ENCODE measurements at regions of chrX and their contacts with region 1.

Region 1: DNA sequence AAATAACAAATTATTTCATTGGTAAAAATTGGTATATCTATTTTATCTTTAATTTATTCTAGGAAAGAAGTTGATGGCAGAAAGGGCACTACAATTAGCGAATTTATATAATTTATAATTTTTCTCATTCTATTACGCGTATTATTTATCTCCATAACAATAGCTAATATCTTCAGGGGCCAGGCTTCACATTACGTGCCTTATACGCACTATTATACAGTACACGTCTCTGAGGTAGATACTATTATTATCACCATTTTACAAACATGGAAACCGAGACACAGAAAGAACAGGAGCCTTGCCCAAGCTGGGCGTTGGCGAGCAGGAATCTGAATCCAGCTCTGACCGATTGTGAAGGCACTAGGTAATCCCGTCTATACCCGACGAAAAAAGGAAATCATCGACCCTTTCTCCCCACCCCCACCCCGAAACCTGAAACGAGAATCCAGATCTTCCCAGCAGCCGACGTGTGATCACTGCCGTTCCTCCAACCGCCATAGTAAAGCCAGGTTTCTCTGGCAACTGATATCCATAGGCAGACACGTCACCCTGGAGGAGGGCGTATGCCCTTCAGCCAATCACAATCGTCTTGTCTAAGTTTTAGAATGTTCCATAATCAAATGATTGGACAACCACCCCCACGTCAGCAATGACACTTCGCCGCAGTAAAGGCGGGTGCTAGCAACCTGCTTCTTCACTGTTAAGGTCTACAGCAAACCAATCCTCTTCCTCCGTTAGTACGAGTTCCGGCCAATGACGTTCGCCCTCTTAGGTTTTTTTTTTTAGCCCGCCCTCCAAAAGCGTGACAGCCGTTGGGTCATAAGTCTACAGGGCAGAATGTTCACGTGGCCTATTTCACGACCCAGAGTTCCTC is at the start of gene MORF4L2:
- DNase-seq: peak; percentile 93
- H3K4me3 Mint-ChIP-seq: peak within 1 kb of the TSS; percentile 83
- H3K27ac Mint-ChIP-seq: peak within 1 kb of the TSS; percentile 90
- H3K4me1 Mint-ChIP-seq: peaks cover 9% of the 10 kb centered on the region
- H3K27me3 Mint-ChIP-seq: no peaks in the 10 kb centered on the region
- total RNA-seq, gene MORF4L2: 184 to 191 TPM

Region 2: DNA sequence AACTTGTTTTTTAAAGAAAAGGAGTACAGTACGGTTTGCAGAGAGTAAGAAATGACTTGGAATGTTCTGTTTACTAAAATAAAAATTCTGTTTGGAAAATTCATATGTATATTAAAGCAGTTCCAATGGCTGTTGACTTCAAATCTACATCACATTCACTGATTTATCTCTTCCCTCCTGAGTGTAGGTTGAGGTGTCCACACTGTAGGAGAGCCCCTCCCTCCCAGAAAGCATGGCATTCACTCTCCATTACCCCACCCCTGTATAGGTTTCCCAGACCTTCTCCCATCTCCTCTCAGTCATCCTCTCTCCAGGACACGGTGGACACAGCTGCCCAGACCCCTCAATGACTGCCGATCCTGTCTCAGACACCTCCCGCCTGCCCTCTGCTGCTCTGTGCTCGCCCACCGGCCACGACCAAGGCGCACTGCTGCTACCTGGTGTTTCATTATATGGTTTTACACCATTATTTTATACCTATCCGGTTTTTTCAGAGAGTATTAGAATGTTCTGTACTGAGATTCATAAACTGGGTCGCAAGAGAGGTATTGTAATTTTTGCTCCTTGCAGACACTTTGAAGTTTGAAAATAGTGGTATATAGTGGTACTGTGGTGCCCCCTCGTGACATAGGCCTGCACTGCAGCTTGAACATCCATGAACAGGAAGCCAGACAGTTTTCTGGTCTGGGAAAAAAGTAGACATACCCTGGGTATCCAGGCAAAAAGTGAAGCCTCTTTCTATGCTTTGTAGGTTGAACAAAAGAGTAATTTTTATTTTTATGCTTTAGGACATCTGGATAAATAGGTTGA is 510.3 kb before region 1 on chrX:
- CTCF ChIA-PET with region 1: no interaction called
- POLR2A ChIA-PET with region 1: no interaction called
- intact Hi-C with region 1: no loop called
- DNase-seq: peak; percentile 69
- H3K4me3 Mint-ChIP-seq: peak overlapping the region; percentile 29
- H3K27ac Mint-ChIP-seq: no peak overlapping the region
- H3K4me1 Mint-ChIP-seq: no peaks in the 10 kb centered on the region
- H3K27me3 Mint-ChIP-seq: peaks cover 4% of the 10 kb centered on the region

Region 3: GRCh38 chrX:103310542-103311398 is 375.7 kb before region 1 on chrX and contains the start of gene BEX2:
- CTCF ChIA-PET with region 1: no interaction called
- POLR2A ChIA-PET with region 1: no interaction called
- intact Hi-C with region 1: loop called (anchors 2 kb)
- DNase-seq: peak; percentile 90
- H3K4me3 Mint-ChIP-seq: peak within 1 kb of the TSS; percentile 69
- H3K27ac Mint-ChIP-seq: no peak within 1 kb of the TSS
- H3K4me1 Mint-ChIP-seq: peaks cover 4% of the 10 kb centered on the region
- H3K27me3 Mint-ChIP-seq: no peaks in the 10 kb centered on the region
- total RNA-seq, gene BEX2: 11.3 to 12.1 TPM

Region 4: DNA sequence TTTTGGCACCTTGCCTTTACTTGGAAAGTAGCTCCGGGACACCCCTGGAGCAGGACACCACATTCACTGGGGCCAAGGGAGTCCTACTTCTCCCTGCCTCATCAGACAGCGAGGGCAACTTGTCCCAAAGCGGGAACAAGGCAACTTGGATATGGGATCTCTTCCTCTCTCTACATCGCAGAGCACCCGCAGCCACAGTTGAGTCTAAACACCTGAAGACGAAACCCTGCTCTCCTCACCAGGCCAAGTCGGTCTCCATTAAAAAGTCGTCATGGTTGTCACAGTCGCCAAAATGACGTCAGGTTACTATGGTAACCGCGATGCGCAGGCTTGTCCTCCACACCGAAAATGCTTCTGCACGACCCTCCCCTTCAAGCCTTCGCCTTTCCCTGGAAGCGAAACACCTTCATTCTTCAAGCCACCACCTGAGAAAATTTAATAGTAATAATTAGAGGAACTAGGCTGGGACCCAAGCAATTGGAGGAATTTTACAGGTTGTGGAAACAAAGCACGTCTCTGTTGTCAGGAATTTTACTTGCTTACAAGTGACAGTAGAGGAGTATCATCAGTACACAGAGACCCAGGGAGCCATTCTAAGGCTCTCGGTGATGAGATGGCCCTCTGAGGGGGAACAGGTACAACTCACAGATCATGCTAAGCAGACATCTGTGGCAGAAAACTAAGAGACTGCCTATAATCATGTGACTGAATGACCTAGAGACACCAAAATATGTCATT is 131.6 kb before region 1 on chrX:
- CTCF ChIA-PET with region 1: no interaction called
- POLR2A ChIA-PET with region 1: no interaction called
- intact Hi-C with region 1: loop called (anchors 2 kb)
- DNase-seq: peak; percentile 77
- H3K4me3 Mint-ChIP-seq: peak overlapping the region; percentile 87
- H3K27ac Mint-ChIP-seq: peak overlapping the region; percentile 64
- H3K4me1 Mint-ChIP-seq: no peaks in the 10 kb centered on the region
- H3K27me3 Mint-ChIP-seq: no peaks in the 10 kb centered on the region

Region 5: GRCh38 chrX:103629318-103630170 is 56.9 kb before region 1 on chrX:
- CTCF ChIA-PET with region 1: no interaction called
- POLR2A ChIA-PET with region 1: no interaction called
- intact Hi-C with region 1: loop called (anchors 1 kb)
- DNase-seq: peak; percentile 42
- H3K4me3 Mint-ChIP-seq: peak overlapping the region; percentile 84
- H3K27ac Mint-ChIP-seq: peak overlapping the region; percentile 70
- H3K4me1 Mint-ChIP-seq: peaks cover 17% of the 10 kb centered on the region
- H3K27me3 Mint-ChIP-seq: no peaks in the 10 kb centered on the region

Region 6: GRCh38 chrX:103774070-103774642 is 87.7 kb after region 1 on chrX:
- CTCF ChIA-PET with region 1: no interaction called
- POLR2A ChIA-PET with region 1: no interaction called
- intact Hi-C with region 1: no loop called
- DNase-seq: no peak
- H3K4me3 Mint-ChIP-seq: no peak overlapping the region
- H3K27ac Mint-ChIP-seq: no peak overlapping the region
- H3K4me1 Mint-ChIP-seq: no peaks in the 10 kb centered on the region
- H3K27me3 Mint-ChIP-seq: peaks cover 5% of the 10 kb centered on the region

Region 7: GRCh38 chrX:103831803-103832544 is 145.5 kb after region 1 on chrX and contains the start of gene RAB9B:
- CTCF ChIA-PET with region 1: interaction called, 3 read pairs
- POLR2A ChIA-PET with region 1: no interaction called
- intact Hi-C with region 1: loop called (anchors 5 kb)
- DNase-seq: peak; percentile 75
- H3K4me3 Mint-ChIP-seq: peak within 1 kb of the TSS; percentile 70
- H3K27ac Mint-ChIP-seq: no peak within 1 kb of the TSS
- H3K4me1 Mint-ChIP-seq: peaks cover 3% of the 10 kb centered on the region
- H3K27me3 Mint-ChIP-seq: peaks cover 4% of the 10 kb centered on the region
- total RNA-seq, gene RAB9B: 0.44 to 0.57 TPM

Region 8: DNA sequence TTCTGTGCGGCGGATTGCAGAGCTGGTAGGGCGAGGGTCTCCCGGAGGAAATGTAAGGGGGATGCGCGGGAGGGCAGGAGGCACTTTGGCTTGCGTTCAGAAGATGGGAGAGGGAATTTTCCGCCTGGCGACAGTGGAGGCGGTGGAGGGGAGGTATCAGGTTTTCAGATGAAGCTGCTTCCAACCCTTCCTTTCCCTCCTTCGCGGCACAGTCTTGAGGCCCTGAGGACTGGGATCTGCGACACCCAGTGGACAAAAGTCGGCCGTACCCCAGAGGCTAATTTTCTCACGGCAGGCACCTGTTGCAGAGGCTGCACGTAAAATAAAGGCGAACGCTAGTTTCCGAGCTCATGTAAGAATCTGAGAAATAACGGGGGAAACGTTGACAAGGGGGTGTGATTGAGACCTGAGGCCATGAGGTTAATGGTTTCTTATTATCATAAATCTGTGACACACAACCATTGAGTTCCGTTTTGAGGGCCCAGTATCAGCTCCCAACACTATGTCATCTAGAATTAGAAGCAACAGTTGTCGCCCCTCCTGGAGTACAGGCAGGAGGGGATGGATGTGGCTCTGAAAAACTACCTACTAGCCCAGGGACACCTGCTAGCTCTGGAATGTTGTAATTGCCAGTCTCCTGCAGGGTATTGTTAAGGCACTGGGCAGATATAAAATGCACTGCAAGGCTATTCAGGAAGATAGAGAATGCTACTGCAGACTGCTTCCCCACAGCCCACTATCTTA is 427.0 kb after region 1 on chrX:
- CTCF ChIA-PET with region 1: no interaction called
- POLR2A ChIA-PET with region 1: no interaction called
- intact Hi-C with region 1: loop called (anchors 2 kb)
- DNase-seq: peak; percentile 70
- H3K4me3 Mint-ChIP-seq: peak overlapping the region; percentile 79
- H3K27ac Mint-ChIP-seq: peak overlapping the region; percentile 49
- H3K4me1 Mint-ChIP-seq: peaks cover 44% of the 10 kb centered on the region
- H3K27me3 Mint-ChIP-seq: no peaks in the 10 kb centered on the region

Region 9: DNA sequence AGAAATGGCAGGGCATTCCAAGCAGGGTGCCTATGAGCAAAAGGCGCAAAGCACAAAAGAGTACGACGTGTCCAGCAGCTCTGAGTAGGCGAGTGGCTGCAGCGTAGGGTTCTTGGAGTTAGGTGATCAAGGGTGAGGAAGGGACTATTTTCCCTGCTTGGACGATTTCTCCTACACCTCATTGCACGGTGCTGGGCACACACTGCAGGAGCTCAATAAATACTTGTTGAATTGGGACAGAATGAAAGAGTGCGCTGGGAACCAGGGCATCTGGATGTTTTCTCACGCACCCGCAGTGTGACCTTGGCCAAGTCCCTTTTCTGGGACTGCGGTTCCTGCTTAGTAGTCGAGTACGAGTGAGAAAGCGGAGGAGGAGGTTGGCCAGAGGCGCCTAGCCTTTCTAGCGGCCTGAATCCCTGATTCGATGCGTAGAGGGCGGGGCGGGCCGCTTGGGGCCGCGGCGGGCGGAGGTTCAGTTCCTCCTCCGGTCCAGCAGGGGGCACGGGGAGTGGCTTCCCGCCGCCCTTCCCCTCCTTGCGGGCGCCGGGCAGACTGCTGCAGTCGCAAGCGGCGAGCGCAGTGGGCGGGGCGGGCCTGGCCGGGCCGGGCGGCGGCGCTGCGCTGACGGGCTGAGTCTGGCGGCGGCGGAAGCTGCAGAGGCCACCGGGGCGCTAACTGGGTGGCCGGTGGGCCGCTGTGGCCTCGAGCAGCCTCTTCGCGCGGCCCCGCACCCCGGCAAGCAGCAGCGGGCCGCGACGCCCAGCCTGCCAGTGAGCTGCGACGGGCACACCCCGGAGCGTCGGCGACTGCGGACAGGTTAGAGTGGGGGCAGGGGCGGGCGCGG is 479.7 kb after region 1 on chrX and contains the start of gene FAM199X:
- CTCF ChIA-PET with region 1: no interaction called
- POLR2A ChIA-PET with region 1: no interaction called
- intact Hi-C with region 1: loop called (anchors 1 kb)
- DNase-seq: peak; percentile 89
- H3K4me3 Mint-ChIP-seq: peak within 1 kb of the TSS; percentile 75
- H3K27ac Mint-ChIP-seq: peak within 1 kb of the TSS; percentile 73
- H3K4me1 Mint-ChIP-seq: peaks cover 35% of the 10 kb centered on the region
- H3K27me3 Mint-ChIP-seq: no peaks in the 10 kb centered on the region
- total RNA-seq, gene FAM199X: 8.3 to 9.1 TPM

Measured in activated CD4-positive, alpha-beta memory T cell treated with anti-CD3 and anti-CD28 coated beads for 36 hours (primary cell).